WTC11 (cell line): ENCODE measurements at regions of chr6 and their contacts with region 1.

Region 1: GRCh38 chr6:2791124-2791974 is 26.2 kb downstream of the WRNIP1 start:
- DNase-seq: peak; percentile 65
- ATAC-seq: peak; percentile 73
- H3K4me3 Mint-ChIP-seq: no peak overlapping the region
- H3K27ac Mint-ChIP-seq: peak overlapping the region; percentile 95
- H3K4me1 Mint-ChIP-seq: peaks cover 13% of the 10 kb centered on the region
- H3K27me3 Mint-ChIP-seq: no peaks in the 10 kb centered on the region
- CTCF ChIP-seq: peak; percentile 43

Region 2: GRCh38 chr6:2684059-2684749 is 107.1 kb before region 1 on chr6:
- CTCF ChIA-PET with region 1: no interaction called
- POLR2A ChIA-PET with region 1: no interaction called
- DNase-seq: no peak
- ATAC-seq: no peak
- H3K4me3 Mint-ChIP-seq: no peak overlapping the region
- H3K27ac Mint-ChIP-seq: no peak overlapping the region
- H3K4me1 Mint-ChIP-seq: no peaks in the 10 kb centered on the region
- H3K27me3 Mint-ChIP-seq: no peaks in the 10 kb centered on the region
- CTCF ChIP-seq: no peak

Region 3: DNA sequence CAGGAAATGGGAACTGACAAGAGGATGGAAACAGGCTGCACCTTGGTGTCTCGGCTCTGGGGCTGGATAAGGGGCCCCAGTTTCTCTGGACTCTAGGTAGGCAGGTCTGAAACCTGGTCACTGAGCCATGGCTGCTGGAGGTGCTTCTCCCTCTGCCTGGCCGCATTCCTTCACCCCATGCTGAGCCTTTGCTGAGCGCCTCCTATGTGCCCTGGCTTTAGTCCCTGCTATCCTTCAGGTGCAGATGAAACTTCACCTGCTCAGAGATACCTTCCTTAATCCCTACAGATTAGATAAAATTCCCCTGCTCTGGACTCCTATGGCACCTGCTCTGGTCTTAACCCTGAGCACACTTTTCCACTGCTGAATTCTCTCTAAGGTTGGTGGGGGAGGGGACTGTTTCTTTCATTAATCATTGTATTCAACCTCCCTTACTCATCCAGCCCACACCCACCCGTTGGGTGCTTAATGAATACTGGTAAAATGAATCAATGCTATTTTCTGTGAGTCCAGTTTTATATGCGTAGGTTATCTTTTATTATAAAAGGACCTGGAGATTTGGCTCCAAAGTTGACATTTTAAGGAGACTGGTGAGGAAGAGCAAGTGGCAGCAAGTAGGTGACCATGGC is 60.0 kb before region 1 on chr6:
- CTCF ChIA-PET with region 1: no interaction called
- POLR2A ChIA-PET with region 1: no interaction called
- DNase-seq: peak; percentile 31
- ATAC-seq: peak; percentile 51
- H3K4me3 Mint-ChIP-seq: no peak overlapping the region
- H3K27ac Mint-ChIP-seq: no peak overlapping the region
- H3K4me1 Mint-ChIP-seq: peaks cover 59% of the 10 kb centered on the region
- H3K27me3 Mint-ChIP-seq: peaks cover 2% of the 10 kb centered on the region; the same call in 1 of the 2 replicates
- CTCF ChIP-seq: no peak

Region 4: DNA sequence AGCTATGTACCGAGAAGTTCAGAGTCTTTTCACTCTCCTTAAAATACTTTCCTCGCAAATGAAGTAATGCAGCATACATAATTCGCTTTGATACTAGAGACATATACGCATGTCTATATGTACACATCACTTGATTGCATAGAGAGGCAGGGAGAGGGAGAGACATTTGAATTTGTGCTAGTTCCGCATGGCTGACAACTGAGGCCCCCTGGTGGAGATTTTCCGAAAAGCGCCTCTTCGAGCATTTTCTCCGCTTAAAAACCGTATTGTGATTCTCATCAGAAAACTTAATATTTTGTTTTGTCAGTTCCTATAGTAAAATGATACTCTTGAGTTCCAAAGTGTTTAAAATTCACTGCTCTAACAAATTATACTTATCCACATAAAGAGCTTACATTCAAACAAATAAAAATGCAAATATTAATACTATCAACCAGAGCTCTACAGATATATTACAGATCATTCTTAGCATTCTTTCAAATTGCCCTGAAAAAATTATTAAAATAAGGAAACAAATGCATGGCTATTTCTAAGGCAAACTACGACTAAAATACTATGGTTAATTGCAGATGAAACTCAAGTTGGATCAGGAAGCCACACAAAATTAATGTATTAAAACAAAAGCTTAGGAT is 41.3 kb before region 1 on chr6:
- CTCF ChIA-PET with region 1: interaction called, 10 read pairs
- POLR2A ChIA-PET with region 1: no interaction called
- DNase-seq: peak; percentile 62
- ATAC-seq: peak; percentile 32; the same call in 1 of the 2 replicates
- H3K4me3 Mint-ChIP-seq: no peak overlapping the region
- H3K27ac Mint-ChIP-seq: no peak overlapping the region
- H3K4me1 Mint-ChIP-seq: peaks cover 8% of the 10 kb centered on the region
- H3K27me3 Mint-ChIP-seq: no peaks in the 10 kb centered on the region
- CTCF ChIP-seq: peak; percentile 83

Region 5: GRCh38 chr6:2773450-2773849 is 17.9 kb before region 1 on chr6:
- CTCF ChIA-PET with region 1: interaction called, 16 read pairs
- POLR2A ChIA-PET with region 1: no interaction called
- DNase-seq: no peak
- ATAC-seq: no peak
- H3K4me3 Mint-ChIP-seq: no peak overlapping the region
- H3K27ac Mint-ChIP-seq: no peak overlapping the region
- H3K4me1 Mint-ChIP-seq: peaks cover 22% of the 10 kb centered on the region
- H3K27me3 Mint-ChIP-seq: no peaks in the 10 kb centered on the region
- CTCF ChIP-seq: no peak

Region 6: DNA sequence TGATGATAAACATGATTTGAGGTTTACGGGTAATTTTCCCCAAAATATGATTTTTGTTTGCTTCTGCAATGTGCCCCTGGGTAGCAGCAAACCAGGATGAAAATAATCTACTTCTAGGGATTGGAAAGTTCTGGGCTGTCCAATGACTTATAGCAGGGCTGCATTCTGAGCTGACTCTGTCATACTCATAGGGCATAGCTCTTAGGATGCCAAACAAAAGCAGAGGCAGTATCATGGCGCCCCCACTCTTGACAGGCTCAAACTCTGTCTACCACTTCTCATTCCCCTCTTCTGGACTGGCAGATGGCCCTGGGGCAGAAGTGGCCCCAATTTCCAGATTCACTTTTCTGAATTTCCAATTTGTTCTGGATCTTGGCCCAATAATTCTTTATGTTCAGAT is 40.0 kb after region 1 on chr6:
- CTCF ChIA-PET with region 1: interaction called, 10 read pairs
- POLR2A ChIA-PET with region 1: no interaction called
- DNase-seq: no peak
- ATAC-seq: no peak; the same call in 1 of the 2 replicates
- H3K4me3 Mint-ChIP-seq: no peak overlapping the region
- H3K27ac Mint-ChIP-seq: no peak overlapping the region
- H3K4me1 Mint-ChIP-seq: no peaks in the 10 kb centered on the region
- H3K27me3 Mint-ChIP-seq: no peaks in the 10 kb centered on the region
- CTCF ChIP-seq: no peak

Region 7: DNA sequence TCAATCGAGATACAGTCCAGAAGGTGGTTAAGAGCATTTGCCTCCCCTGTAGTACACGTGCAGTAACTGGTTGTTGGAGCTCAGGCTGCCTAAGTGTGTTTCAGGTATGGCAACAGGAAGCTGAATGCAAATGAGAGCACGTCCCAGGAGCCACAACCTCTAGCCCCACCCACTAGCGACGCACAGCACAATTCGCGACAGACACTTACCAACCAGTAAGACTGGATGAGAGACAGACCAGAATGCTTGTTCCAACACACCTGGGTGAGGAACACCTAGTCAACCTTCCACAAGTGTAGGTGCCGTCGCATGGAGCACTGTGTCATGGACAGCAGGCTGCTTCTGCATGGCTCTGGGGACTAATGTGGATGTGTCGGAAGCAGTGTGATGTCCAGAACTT is 57.5 kb after region 1 on chr6:
- CTCF ChIA-PET with region 1: interaction called, 29 read pairs
- POLR2A ChIA-PET with region 1: no interaction called
- DNase-seq: peak; percentile 63
- ATAC-seq: peak; percentile 82
- H3K4me3 Mint-ChIP-seq: 0 out of 2 replicates have a peak overlapping the region, but pooled peaks have one; percentile 0
- H3K27ac Mint-ChIP-seq: peak overlapping the region; percentile 88
- H3K4me1 Mint-ChIP-seq: peaks cover 37% of the 10 kb centered on the region
- H3K27me3 Mint-ChIP-seq: no peaks in the 10 kb centered on the region
- CTCF ChIP-seq: no peak

Region 8: DNA sequence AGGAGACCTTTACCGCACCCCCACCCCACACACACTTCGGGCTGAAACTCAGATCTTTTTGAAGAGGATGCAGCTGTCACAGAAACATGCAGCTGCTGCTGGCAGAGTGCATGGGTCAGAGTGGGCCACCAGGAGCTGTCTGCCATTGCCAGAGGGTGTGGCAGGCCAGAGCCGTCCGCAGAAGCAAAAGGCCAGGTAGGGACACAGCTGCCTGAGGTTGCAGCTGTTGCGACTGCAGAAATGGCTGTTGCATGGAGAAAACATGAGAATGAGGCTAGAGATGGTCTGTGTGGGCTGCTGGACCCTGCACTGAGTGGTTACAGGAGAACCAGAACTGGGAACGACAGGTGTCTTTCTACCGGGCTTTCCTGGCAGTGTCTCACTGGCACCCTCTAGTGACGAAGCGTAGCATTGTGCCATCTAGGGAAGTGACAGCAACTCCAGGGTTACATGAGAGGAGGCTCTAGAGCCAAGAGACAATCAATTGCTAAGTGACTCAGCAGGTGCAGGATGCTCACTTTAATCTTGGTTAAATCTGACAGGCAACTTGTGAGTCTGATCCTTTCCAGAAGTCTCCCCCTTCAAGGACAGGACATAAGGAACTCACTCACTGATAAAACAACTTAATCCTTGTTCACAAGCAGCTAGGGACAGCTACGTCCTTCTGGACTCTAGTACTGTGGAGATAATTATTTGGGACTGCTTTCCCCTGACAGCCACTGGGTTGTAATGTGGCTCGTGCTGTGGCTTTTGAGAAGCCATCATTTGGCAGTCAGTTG is 140.8 kb after region 1 on chr6:
- CTCF ChIA-PET with region 1: interaction called, 43 read pairs
- POLR2A ChIA-PET with region 1: interaction called, 7 read pairs
- DNase-seq: peak; percentile 95
- ATAC-seq: peak; percentile 93
- H3K4me3 Mint-ChIP-seq: no peak overlapping the region
- H3K27ac Mint-ChIP-seq: peak overlapping the region; percentile 92; the same call in 1 of the 2 replicates
- H3K4me1 Mint-ChIP-seq: peaks cover 50% of the 10 kb centered on the region
- H3K27me3 Mint-ChIP-seq: no peaks in the 10 kb centered on the region
- CTCF ChIP-seq: peak; percentile 88